ENCODE measurements at regions of chr19 and their contacts with region 1.

Region 1: DNA sequence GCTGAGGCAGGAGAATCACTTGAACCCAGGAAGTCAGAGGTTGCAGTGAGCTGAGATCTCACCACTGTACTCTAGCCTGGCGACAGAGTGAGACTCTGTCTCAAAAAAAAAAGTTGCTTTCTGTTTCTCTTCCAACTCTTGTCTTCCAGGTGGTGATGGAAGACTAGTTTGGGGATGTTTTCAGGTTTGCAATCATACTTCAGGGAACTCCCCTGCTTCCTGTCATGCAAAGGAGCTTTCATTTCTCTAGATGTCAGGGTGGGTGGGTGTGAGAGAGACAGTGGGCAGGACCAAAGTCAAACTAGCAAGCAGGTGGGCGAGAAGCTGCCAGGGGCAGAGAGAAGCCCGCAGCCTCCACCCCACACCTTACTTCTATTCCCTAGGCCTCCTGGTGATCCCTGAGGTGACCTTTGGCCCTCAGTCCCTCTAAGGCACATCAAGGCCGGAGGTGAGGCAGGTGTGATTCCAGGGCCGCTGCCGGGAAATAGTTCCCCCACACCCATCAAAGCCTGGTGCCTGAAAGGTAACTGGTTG is 25.7 kb downstream of the CCNE1 start:
- DNase-seq: peak; percentile 76
- ATAC-seq: peak; percentile 81
- H3K4me3 Mint-ChIP-seq: peak overlapping the region; percentile 51
- H3K27ac Mint-ChIP-seq: peak overlapping the region; percentile 99
- H3K4me1 Mint-ChIP-seq: peaks cover 52% of the 10 kb centered on the region
- H3K27me3 Mint-ChIP-seq: no peaks in the 10 kb centered on the region

Region 2: GRCh38 chr19:29576761-29577648 is 260.5 kb before region 1 on chr19:
- CTCF ChIA-PET with region 1: no interaction called
- POLR2A ChIA-PET with region 1: no interaction called
- intact Hi-C with region 1: no loop called
- DNase-seq: peak; percentile 70
- ATAC-seq: peak; percentile 98
- H3K4me3 Mint-ChIP-seq: no peak overlapping the region
- H3K27ac Mint-ChIP-seq: no peak overlapping the region
- H3K4me1 Mint-ChIP-seq: peaks cover 26% of the 10 kb centered on the region
- H3K27me3 Mint-ChIP-seq: peaks cover 59% of the 10 kb centered on the region

Region 3: DNA sequence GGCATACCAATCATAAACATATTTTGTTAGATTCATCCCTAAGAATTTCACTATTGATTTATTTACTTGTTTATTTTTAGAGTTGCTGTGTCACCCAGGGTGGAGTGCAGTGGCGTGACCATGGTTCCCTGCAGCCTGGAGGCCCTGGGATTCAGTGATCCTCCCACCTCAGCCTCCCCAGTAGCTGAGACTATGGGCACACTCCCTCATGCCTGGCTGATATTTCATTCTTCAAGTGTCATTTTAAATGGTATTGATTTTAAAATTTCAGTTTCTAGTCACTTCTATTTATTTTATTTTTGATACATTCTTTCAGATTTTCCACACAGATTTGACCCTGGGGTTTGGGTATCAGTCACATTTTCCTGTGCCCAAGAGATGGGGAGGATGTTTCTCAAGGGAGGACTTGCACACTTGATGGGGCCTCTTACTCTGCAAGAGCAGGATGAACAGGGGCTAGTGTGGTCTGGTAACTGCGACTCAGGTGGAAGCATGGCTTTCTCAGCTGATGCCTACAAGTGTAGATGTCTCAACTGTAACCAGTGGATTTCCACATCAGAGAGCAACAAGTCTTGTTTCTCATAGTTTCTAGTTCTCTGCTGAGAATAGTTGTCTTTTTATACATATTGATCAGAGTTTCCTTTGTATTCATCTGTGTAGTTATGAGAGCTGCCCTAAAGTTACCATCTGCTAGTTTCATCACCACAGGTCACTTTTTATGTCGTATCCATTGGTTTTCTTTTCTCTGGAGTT is 14.4 kb after region 1 on chr19:
- CTCF ChIA-PET with region 1: no interaction called
- POLR2A ChIA-PET with region 1: interaction called, 6 read pairs
- intact Hi-C with region 1: loop called in 1 of 2 experiments (anchors 2 kb)
- DNase-seq: peak; percentile 67
- ATAC-seq: peak; percentile 96
- H3K4me3 Mint-ChIP-seq: no peak overlapping the region
- H3K27ac Mint-ChIP-seq: peak overlapping the region; percentile 53
- H3K4me1 Mint-ChIP-seq: peaks cover 17% of the 10 kb centered on the region
- H3K27me3 Mint-ChIP-seq: peaks cover 1% of the 10 kb centered on the region

Measured in activated CD4-positive, alpha-beta T cell treated with anti-CD3 and anti-CD28 coated beads for 36 hours (primary cell).